ENCODE measurements at regions of chr4 and their contacts with region 1.

Region 1: DNA sequence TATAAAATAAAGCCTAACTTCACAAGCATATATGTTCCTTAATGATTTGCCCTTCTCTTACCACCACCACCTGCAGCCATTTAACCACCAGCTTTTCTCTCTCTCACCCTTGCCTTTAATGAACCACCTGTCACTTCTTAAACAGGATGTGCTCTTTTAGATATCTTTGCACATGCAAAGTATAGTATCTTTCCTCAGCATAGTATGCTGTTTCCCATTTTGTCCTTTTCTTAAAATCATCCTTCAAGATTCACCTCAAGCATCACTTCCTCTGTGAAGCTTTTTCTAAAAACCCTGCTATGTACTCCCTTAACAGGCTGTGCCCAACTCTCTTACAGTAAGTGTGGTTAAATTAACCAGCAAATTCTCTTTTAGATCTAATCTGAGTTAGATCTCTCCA is 8.2 kb upstream of the CNOT6L start:
- DNase-seq: peak in 4 of 5 donors; percentile 44 to 62 (median 54)
- H3K4me3 ChIP-seq: peak overlapping the region in 1 of 2 donors; percentile 8
- H3K4me3 Mint-ChIP-seq: peak overlapping the region in 7 of 8 donors; percentile 23 to 68 (median 43)
- H3K27ac ChIP-seq: peak overlapping the region; percentile 11
- H3K27ac Mint-ChIP-seq: peak overlapping the region; percentile 39 to 93 (median 86)
- H3K4me1 ChIP-seq: peaks cover 59% of the 10 kb centered on the region
- H3K4me1 Mint-ChIP-seq: peaks cover 25 to 59% (median 41%) of the 10 kb centered on the region in 4 donors
- H3K27me3 ChIP-seq: no peaks in the 10 kb centered on the region
- H3K27me3 Mint-ChIP-seq: no peaks in the 10 kb centered on the region

Region 2: GRCh38 chr4:77852892-77853495 is 25.7 kb after region 1 on chr4:
- CTCF ChIA-PET with region 1: interaction called, 6 read pairs
- POLR2A ChIA-PET with region 1: interaction called, 908 read pairs
- intact Hi-C with region 1: no loop called
- DNase-seq: peak; percentile 76 to 90 (median 80)
- H3K4me3 ChIP-seq: peak overlapping the region; percentile 37
- H3K4me3 Mint-ChIP-seq: peak overlapping the region; percentile 73 to 91 (median 79)
- H3K27ac ChIP-seq: peak overlapping the region; percentile 78
- H3K27ac Mint-ChIP-seq: peak overlapping the region; percentile 90 to 100 (median 99)
- H3K4me1 ChIP-seq: peaks cover 62% of the 10 kb centered on the region
- H3K4me1 Mint-ChIP-seq: peaks cover 43 to 59% (median 51%) of the 10 kb centered on the region in 4 donors
- H3K27me3 ChIP-seq: no peaks in the 10 kb centered on the region
- H3K27me3 Mint-ChIP-seq: no peaks in the 10 kb centered on the region